ENCODE measurements at regions of chr6 and their contacts with region 1.

Region 1: DNA sequence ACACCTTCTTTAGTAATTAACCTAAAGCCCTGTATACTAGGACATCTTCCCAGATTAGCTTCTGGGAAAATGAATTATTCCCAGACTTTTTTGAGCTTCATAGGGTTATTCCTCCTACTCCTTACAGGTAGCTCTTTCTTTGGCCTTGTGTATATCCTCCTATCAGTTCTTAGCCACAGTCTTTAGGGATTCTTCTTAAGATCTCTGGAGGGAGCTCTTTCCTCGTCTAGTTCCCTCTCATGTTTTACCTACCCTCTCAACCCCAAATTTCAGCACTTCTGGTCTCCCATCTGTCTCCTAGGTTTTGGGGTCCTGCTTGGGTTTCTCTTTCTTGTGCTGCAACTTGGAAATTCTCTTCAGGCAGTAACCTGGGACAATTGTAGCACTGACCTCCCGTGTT is 46.4 kb upstream of the SLC35B3 start:
- DNase-seq: no peak
- ATAC-seq: peak; percentile 99
- H3K4me3 Mint-ChIP-seq: no peak overlapping the region
- H3K27ac Mint-ChIP-seq: no peak overlapping the region
- H3K4me1 Mint-ChIP-seq: no peaks in the 10 kb centered on the region
- H3K27me3 Mint-ChIP-seq: no peaks in the 10 kb centered on the region
- CTCF ChIP-seq: no peak

Region 2: GRCh38 chr6:8131256-8131897 is 350.3 kb before region 1 on chr6:
- CTCF ChIA-PET with region 1: interaction called, 18 read pairs
- POLR2A ChIA-PET with region 1: no interaction called
- DNase-seq: peak; percentile 65
- ATAC-seq: peak; percentile 97
- H3K4me3 Mint-ChIP-seq: 0 out of 2 replicates have a peak overlapping the region, but pooled peaks have one; percentile 11
- H3K27ac Mint-ChIP-seq: no peak overlapping the region
- H3K4me1 Mint-ChIP-seq: no peaks in the 10 kb centered on the region; the same call in 1 of the 2 replicates
- H3K27me3 Mint-ChIP-seq: no peaks in the 10 kb centered on the region
- CTCF ChIP-seq: peak; percentile 48

Region 3: GRCh38 chr6:8492536-8493133 is 10.9 kb after region 1 on chr6:
- CTCF ChIA-PET with region 1: interaction called, 16 read pairs
- POLR2A ChIA-PET with region 1: no interaction called
- DNase-seq: no peak
- ATAC-seq: no peak
- H3K4me3 Mint-ChIP-seq: no peak overlapping the region
- H3K27ac Mint-ChIP-seq: no peak overlapping the region
- H3K4me1 Mint-ChIP-seq: peaks cover 17% of the 10 kb centered on the region
- H3K27me3 Mint-ChIP-seq: no peaks in the 10 kb centered on the region
- CTCF ChIP-seq: no peak

Region 4: DNA sequence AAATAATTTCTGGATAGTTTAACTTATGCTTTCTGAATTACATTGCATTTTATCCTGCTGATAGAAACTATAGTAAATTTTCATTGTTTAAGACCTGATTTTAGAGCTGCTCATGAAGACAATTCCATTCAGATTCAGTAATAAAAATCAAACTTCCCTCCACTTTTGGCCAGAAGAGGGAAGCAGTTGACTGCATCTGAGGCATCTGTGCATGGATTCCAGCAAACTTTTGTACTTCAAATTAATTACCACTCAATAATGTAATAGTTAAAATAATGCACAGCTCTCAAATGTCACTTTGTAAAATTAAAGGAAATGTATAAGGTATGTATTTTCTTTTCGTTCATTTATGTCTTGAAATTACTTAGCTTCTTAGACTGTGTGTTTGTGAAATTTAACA is 17.8 kb after region 1 on chr6:
- CTCF ChIA-PET with region 1: interaction called, 11 read pairs
- POLR2A ChIA-PET with region 1: interaction called, 3 read pairs
- DNase-seq: no peak
- ATAC-seq: no peak
- H3K4me3 Mint-ChIP-seq: no peak overlapping the region
- H3K27ac Mint-ChIP-seq: no peak overlapping the region
- H3K4me1 Mint-ChIP-seq: peaks cover 30% of the 10 kb centered on the region
- H3K27me3 Mint-ChIP-seq: no peaks in the 10 kb centered on the region
- CTCF ChIP-seq: no peak; the same call in 1 of the 2 replicates

Region 5: GRCh38 chr6:8506123-8506522 is 24.4 kb after region 1 on chr6:
- CTCF ChIA-PET with region 1: interaction called, 12 read pairs
- POLR2A ChIA-PET with region 1: interaction called, 3 read pairs
- DNase-seq: peak; percentile 21
- ATAC-seq: peak; percentile 91
- H3K4me3 Mint-ChIP-seq: no peak overlapping the region
- H3K27ac Mint-ChIP-seq: no peak overlapping the region
- H3K4me1 Mint-ChIP-seq: peaks cover 46% of the 10 kb centered on the region
- H3K27me3 Mint-ChIP-seq: no peaks in the 10 kb centered on the region
- CTCF ChIP-seq: no peak

Region 6: GRCh38 chr6:8758412-8758811 is 276.7 kb after region 1 on chr6:
- CTCF ChIA-PET with region 1: no interaction called
- POLR2A ChIA-PET with region 1: no interaction called
- DNase-seq: no peak
- ATAC-seq: no peak
- H3K4me3 Mint-ChIP-seq: no peak overlapping the region
- H3K27ac Mint-ChIP-seq: no peak overlapping the region
- H3K4me1 Mint-ChIP-seq: peaks cover 19% of the 10 kb centered on the region
- H3K27me3 Mint-ChIP-seq: no peaks in the 10 kb centered on the region
- CTCF ChIP-seq: no peak

Region 7: DNA sequence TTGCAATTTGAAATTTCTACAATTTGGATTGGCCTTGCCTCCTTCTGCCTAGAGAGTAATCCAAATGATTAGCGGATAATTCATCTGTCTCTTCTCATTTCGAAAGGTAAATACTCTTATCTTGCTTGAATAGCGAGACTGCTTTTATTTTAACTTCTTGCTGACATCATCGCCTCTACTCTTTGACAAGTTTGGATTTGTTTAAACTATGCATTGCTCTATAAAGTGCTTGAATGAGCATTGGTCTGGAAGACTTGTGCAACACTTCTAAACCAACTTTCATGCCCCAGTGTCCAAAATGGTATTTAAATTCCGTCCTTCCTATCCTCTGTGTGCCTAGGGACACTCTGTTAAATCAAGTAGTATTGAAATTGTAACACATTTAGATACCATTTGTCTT is 337.7 kb after region 1 on chr6:
- CTCF ChIA-PET with region 1: no interaction called
- POLR2A ChIA-PET with region 1: no interaction called
- DNase-seq: no peak
- ATAC-seq: no peak
- H3K4me3 Mint-ChIP-seq: no peak overlapping the region
- H3K27ac Mint-ChIP-seq: no peak overlapping the region
- H3K4me1 Mint-ChIP-seq: no peaks in the 10 kb centered on the region; the same call in 1 of the 2 replicates
- H3K27me3 Mint-ChIP-seq: no peaks in the 10 kb centered on the region
- CTCF ChIP-seq: no peak